ENCODE measurements at regions of chr6 and their contacts with region 1.

Region 1: GRCh38 chr6:39309942-39310531 is 4.2 kb downstream of the KCNK17 start:
- H3K4me3 ChIP-seq: no peak overlapping the region
- H3K27ac ChIP-seq: no peak overlapping the region
- H3K4me1 ChIP-seq: no peaks in the 10 kb centered on the region
- CTCF ChIP-seq: peak; percentile 90

Region 2: GRCh38 chr6:39153766-39154397 is 156.2 kb before region 1 on chr6:
- CTCF ChIA-PET with region 1: interaction called, 15 read pairs
- POLR2A ChIA-PET with region 1: no interaction called
- H3K4me3 ChIP-seq: no peak overlapping the region
- H3K27ac ChIP-seq: no peak overlapping the region
- H3K4me1 ChIP-seq: peaks cover 6% of the 10 kb centered on the region; the same call in 1 of the 2 replicates
- CTCF ChIP-seq: no peak

Region 3: GRCh38 chr6:39402239-39402751 is 92.3 kb after region 1 on chr6:
- CTCF ChIA-PET with region 1: no interaction called
- POLR2A ChIA-PET with region 1: no interaction called
- H3K4me3 ChIP-seq: no peak overlapping the region
- H3K27ac ChIP-seq: no peak overlapping the region
- H3K4me1 ChIP-seq: no peaks in the 10 kb centered on the region
- CTCF ChIP-seq: no peak

Measured in HEK293 (cell line).